ENCODE measurements at regions of chr1 and their contacts with region 1.

Region 1: GRCh38 chr1:211133836-211134669 is at the start of gene KCNH1:
- DNase-seq: peak; percentile 54
- H3K4me3 Mint-ChIP-seq: peak within 1 kb of the TSS; percentile 50
- H3K27ac Mint-ChIP-seq: no peak within 1 kb of the TSS
- H3K4me1 Mint-ChIP-seq: no peaks in the 10 kb centered on the region
- H3K27me3 Mint-ChIP-seq: peaks cover 70% of the 10 kb centered on the region
- total RNA-seq, gene KCNH1: not detected in 2 replicates

Region 2: DNA sequence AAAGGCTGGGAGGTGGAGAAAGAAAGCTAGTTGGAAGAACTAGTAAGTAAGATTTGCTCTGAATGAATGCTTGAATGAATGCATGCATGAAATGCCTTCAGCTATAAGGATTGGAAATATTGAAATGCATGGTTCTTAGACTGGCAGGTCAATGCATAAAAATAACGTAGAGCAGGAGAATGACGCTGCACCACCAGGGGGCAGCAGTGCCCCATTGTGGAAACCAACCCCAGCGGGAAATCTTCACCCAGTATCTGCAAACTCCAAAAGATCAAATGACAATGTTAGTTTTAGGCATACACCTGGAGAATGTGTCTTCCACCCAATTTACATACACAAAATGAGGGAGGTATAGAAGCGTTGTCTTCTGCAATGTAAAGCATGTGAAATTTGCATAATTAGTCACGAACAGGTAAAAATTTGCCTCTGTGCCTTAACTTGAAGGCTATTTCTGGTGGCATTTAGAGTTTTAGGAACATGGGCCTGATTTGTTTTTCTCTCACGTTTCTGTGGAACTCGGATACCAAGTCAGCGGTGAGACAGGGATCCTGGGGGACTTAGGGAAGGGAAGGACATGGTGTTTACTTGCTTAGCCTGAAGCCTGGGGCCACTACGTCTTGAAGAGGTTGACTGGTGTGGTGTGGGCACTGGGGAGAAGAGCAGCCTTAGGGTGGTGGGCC is 726.7 kb before region 1 on chr1:
- intact Hi-C with region 1: loop called (anchors 1 kb)
- DNase-seq: peak; percentile 49
- H3K4me3 Mint-ChIP-seq: no peak overlapping the region
- H3K27ac Mint-ChIP-seq: no peak overlapping the region
- H3K4me1 Mint-ChIP-seq: no peaks in the 10 kb centered on the region
- H3K27me3 Mint-ChIP-seq: peaks cover 6% of the 10 kb centered on the region

Region 3: GRCh38 chr1:210584439-210585113 is 549.5 kb before region 1 on chr1:
- intact Hi-C with region 1: loop called (anchors 1 kb)
- DNase-seq: peak; percentile 37
- H3K4me3 Mint-ChIP-seq: no peak overlapping the region
- H3K27ac Mint-ChIP-seq: no peak overlapping the region
- H3K4me1 Mint-ChIP-seq: peaks cover 9% of the 10 kb centered on the region
- H3K27me3 Mint-ChIP-seq: no peaks in the 10 kb centered on the region

Region 4: GRCh38 chr1:211158866-211159265 is 24.8 kb after region 1 on chr1:
- intact Hi-C with region 1: no loop called
- DNase-seq: no peak
- H3K4me3 Mint-ChIP-seq: no peak overlapping the region
- H3K27ac Mint-ChIP-seq: no peak overlapping the region
- H3K4me1 Mint-ChIP-seq: no peaks in the 10 kb centered on the region
- H3K27me3 Mint-ChIP-seq: peaks cover 5% of the 10 kb centered on the region

Region 5: DNA sequence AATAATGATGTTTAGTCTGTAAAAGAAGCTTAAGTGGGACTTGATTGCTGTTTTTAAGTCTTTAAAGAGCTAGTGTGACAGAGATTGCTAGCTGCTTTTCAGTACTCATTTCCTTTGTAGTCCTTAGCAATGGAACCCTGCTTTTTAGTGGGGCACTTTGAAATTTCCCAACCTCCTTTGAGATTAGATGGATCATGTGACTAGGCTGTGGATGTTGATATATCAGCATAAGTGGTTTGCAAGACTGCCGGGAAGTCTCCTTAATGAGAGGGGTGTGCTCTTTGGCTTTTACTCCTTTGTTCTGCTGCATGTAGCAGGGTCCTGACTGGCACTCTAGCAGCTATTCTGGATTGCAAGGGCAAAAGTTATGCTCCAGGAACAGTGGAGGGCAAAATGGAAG is 113.9 kb after region 1 on chr1:
- intact Hi-C with region 1: no loop called
- DNase-seq: no peak
- H3K4me3 Mint-ChIP-seq: no peak overlapping the region
- H3K27ac Mint-ChIP-seq: no peak overlapping the region
- H3K4me1 Mint-ChIP-seq: no peaks in the 10 kb centered on the region
- H3K27me3 Mint-ChIP-seq: peaks cover 14% of the 10 kb centered on the region

Region 6: GRCh38 chr1:211654838-211655787 is 521.1 kb after region 1 on chr1:
- intact Hi-C with region 1: loop called (anchors 5 kb)
- DNase-seq: peak; percentile 63
- H3K4me3 Mint-ChIP-seq: no peak overlapping the region
- H3K27ac Mint-ChIP-seq: no peak overlapping the region
- H3K4me1 Mint-ChIP-seq: peaks cover 6% of the 10 kb centered on the region
- H3K27me3 Mint-ChIP-seq: peaks cover 3% of the 10 kb centered on the region